A549 (cell line): ENCODE measurements at regions of chr20 and their contacts with region 1.

Region 1: GRCh38 chr20:58087193-58087858 is 141.1 kb downstream of the ANKRD60 start:
- DNase-seq: peak; percentile 56 to 57
- ATAC-seq: peak in 1 of 2 experiments; percentile 76; a peak in 3 of 6 replicates
- H3K4me3 ChIP-seq: no peak overlapping the region
- H3K27ac ChIP-seq: peak overlapping the region; percentile 42 to 70
- H3K4me1 ChIP-seq: peaks cover 4% of the 10 kb centered on the region
- CTCF ChIP-seq: peak; percentile 76
- EP300 ChIP-seq: no peak
- POLR2A ChIP-seq: no peak
- RAD21 ChIP-seq: peak; percentile 83 to 89

Region 2: DNA sequence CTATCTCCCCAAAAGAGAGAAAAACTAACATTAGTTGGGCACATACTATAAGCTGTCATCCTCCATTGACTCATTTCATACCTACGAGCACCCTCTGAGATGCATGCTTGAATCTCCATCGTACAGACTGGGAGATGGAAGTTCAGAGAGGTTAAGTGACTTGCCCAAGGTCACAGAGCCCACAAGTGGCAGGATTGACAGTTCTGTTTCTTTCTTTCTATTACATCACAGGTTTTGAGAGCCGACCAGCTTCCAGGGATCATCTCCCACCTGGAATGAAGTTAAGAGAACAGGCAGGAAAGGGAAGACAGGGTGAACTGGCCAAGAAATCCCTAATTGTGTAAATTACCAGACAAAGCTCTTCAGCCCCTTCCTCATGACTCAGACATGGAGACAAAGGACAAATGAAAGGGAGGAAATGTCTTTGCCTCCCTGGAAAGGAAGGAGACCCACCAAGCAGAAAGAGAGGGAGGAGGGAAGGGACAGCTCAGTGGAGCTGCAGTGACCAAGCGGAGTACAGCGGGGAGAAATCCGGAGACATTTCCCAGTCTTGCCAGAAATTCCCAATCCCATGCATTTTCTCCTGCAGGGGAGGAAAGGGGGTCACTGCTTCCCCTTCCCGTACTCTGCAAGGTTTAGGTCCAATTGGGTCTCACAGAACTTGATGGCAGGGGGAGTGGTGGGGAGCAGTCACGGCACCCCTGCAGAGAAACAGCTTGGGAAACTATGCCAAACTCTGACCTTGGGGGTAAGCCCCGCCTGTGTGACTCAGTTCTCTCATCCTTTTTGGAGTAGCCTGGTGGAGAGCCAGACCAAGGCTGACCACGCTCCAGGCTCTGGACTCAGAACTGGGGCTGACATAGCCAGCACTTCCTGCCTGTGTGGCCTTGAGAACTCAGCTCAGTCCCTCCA is 13.1 kb before region 1 on chr20:
- CTCF ChIA-PET with region 1: interaction called, 41 read pairs
- POLR2A ChIA-PET with region 1: no interaction called
- DNase-seq: no peak
- ATAC-seq: no peak
- H3K4me3 ChIP-seq: no peak overlapping the region
- H3K27ac ChIP-seq: peak overlapping the region in 1 of 2 experiments; percentile 56; a peak in 3 of 6 replicates
- H3K4me1 ChIP-seq: peaks cover 8% of the 10 kb centered on the region; the same call in 2 of the 3 replicates
- CTCF ChIP-seq: no peak
- EP300 ChIP-seq: no peak
- POLR2A ChIP-seq: no peak
- RAD21 ChIP-seq: no peak

Region 3: GRCh38 chr20:58102260-58102659 is 14.9 kb after region 1 on chr20:
- CTCF ChIA-PET with region 1: interaction called, 17 read pairs
- POLR2A ChIA-PET with region 1: no interaction called
- DNase-seq: no peak
- ATAC-seq: no peak
- H3K4me3 ChIP-seq: no peak overlapping the region
- H3K27ac ChIP-seq: no peak overlapping the region
- H3K4me1 ChIP-seq: no peaks in the 10 kb centered on the region
- CTCF ChIP-seq: no peak
- EP300 ChIP-seq: no peak
- POLR2A ChIP-seq: no peak
- RAD21 ChIP-seq: no peak

Region 4: GRCh38 chr20:58716644-58717510 is 629.6 kb after region 1 on chr20:
- CTCF ChIA-PET with region 1: no interaction called
- POLR2A ChIA-PET with region 1: no interaction called
- DNase-seq: no peak
- ATAC-seq: no peak
- H3K4me3 ChIP-seq: no peak overlapping the region
- H3K27ac ChIP-seq: no peak overlapping the region
- H3K4me1 ChIP-seq: no peaks in the 10 kb centered on the region
- CTCF ChIP-seq: no peak
- EP300 ChIP-seq: no peak
- POLR2A ChIP-seq: no peak
- RAD21 ChIP-seq: no peak